Mammary epithelial cell (primary cell): ENCODE measurements at regions of chrX and their contacts with region 1.

Region 1: DNA sequence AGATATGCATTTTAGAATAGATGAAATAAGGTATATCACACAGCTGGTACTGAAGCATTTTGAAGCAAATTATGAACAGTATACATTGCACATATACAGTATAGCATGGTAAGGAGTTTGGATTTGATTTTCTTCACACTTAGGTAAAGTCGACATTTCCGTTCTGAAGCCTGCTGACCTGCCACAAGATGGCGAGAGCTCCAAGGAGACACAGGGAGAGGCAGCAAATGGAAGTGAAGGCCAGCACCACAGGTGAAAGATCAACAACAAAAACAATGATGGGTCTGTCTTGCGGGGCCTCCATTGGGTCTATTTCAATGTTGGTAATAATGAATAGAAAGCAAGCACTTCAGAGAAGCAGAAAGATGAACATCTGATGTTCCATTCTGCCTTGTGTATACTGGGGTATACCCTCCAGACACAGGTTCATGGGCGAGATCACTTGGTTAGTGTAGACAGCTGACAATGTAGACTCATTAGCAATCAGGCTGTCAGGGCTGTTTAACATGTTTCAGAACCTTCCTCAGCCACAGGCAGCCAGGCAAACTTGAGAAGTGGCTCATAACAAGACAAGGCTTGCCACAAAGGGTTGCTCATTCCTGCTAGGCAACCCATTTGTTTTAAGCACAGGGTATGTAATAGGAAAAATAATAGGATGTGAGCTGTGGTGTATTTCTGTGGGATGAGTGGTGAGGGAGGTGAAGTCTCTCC is 21.4 kb upstream of the NOX1 start:
- DNase-seq: peak; percentile 93
- H3K4me3 ChIP-seq: no peak overlapping the region
- H3K27ac ChIP-seq: peak overlapping the region; percentile 74
- H3K4me1 ChIP-seq: peaks cover 17% of the 10 kb centered on the region
- H3K27me3 ChIP-seq: peaks cover 2% of the 10 kb centered on the region
- CTCF ChIP-seq: peak; percentile 44 to 70

Region 2: DNA sequence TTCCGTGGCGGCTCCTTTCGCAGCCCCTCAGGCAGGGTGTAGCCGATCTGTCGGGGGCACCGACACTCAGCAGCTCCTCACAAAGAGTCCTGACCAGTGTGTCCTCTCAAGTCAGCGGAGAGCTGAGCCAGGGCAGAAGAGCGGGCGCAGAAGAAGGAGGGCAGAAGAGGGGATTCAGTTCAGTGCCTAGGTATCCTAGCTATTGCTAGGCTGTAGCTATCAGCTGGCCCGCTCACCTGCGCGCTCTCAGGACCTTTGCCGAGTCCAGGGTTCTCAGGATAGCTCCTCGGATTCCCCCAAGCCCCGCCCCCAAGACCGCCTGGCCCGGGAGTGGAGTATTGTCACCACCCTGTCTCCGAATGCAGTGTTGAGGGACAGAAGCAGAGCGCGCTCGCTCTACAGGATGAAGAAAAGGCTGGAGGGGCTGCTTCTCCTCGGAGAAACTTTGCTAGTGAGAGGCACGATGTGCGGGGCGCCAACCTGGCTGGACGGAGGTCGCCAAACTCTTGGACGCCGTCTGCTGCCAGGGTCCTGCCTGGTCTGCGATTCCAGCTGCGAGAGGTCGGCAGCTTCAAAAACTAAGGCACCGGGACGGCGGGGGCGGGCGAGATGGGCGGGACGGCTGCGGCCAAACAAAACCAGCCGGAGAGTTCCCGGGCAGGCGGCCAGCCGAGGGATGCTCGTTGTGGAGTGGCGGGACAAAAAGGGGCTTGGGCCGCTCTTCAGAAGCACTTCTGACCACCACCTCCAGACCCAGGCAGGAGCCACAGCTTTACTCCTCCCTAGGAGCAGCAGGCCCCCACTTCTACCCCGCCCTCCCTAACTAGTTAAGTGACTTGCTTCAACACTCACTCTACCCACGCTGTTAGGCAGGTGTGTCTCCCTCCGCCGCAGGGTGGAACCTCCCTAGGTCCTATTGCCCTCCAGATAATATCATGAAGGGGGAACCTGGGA is 33.4 kb after region 1 on chrX and contains the start of gene XKRX:
- CTCF ChIA-PET with region 1: no interaction called
- dilution Hi-C with region 1: no loop called
- in situ Hi-C with region 1: no loop called
- intact Hi-C with region 1: loop called (anchors 2 kb)
- DNase-seq: peak; percentile 39
- H3K4me3 ChIP-seq: peak within 1 kb of the TSS; percentile 52 to 58 (median 57)
- H3K27ac ChIP-seq: no peak within 1 kb of the TSS
- H3K4me1 ChIP-seq: no peaks in the 10 kb centered on the region
- H3K27me3 ChIP-seq: no peaks in the 10 kb centered on the region
- CTCF ChIP-seq: no peak
- total RNA-seq, gene XKRX: 0.82 to 1.2 TPM

Region 3: GRCh38 chrX:100994352-100995281 is 99.1 kb after region 1 on chrX:
- CTCF ChIA-PET with region 1: no interaction called
- dilution Hi-C with region 1: no loop called
- in situ Hi-C with region 1: no loop called
- intact Hi-C with region 1: loop called (anchors 5 kb)
- DNase-seq: peak; percentile 79
- H3K4me3 ChIP-seq: no peak overlapping the region
- H3K27ac ChIP-seq: peak overlapping the region; percentile 76
- H3K4me1 ChIP-seq: peaks cover 32% of the 10 kb centered on the region
- H3K27me3 ChIP-seq: no peaks in the 10 kb centered on the region
- CTCF ChIP-seq: no peak

Region 4: GRCh38 chrX:101097546-101098453 is 202.3 kb after region 1 on chrX and contains the start of gene CENPI:
- CTCF ChIA-PET with region 1: no interaction called
- dilution Hi-C with region 1: no loop called
- in situ Hi-C with region 1: no loop called
- intact Hi-C with region 1: loop called (anchors 1 kb)
- DNase-seq: peak; percentile 91
- H3K4me3 ChIP-seq: peak within 1 kb of the TSS; percentile 53 to 72 (median 55)
- H3K27ac ChIP-seq: peak within 1 kb of the TSS; percentile 55
- H3K4me1 ChIP-seq: peaks cover 3% of the 10 kb centered on the region
- H3K27me3 ChIP-seq: no peaks in the 10 kb centered on the region
- CTCF ChIP-seq: no peak
- total RNA-seq, gene CENPI: 2.2 to 13.9 TPM

Region 5: DNA sequence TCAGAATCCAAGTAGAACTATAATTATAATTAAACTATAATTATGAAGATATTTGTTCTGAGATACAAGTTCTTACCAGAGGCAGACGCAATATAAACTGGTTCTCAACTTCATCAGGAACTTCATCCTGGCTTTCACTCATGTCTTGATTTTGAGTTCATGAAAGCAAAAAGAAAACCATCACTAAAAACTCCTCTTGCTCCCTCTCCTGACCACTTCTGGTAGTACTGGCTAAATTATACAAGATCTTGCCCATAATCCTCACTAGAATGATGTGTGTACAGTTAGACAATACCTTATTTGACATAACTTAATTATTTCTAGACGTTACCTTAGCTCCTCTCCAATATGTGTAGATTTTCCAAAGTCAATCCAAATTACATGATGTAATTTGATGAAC is 391.9 kb after region 1 on chrX:
- CTCF ChIA-PET with region 1: no interaction called
- dilution Hi-C with region 1: no loop called
- in situ Hi-C with region 1: loop called in 1 of 2 experiments (anchors 25 kb)
- intact Hi-C with region 1: loop called (anchors 1 kb)
- DNase-seq: peak; percentile 25
- H3K4me3 ChIP-seq: no peak overlapping the region
- H3K27ac ChIP-seq: no peak overlapping the region
- H3K4me1 ChIP-seq: no peaks in the 10 kb centered on the region
- H3K27me3 ChIP-seq: peaks cover 2% of the 10 kb centered on the region
- CTCF ChIP-seq: peak; percentile 62 to 67